Activated T-helper 1 cell treated with anti-CD3 and anti-CD28 coated beads, Interleukin-12 subunit alpha, Interleukin-12 subunit beta, Interleukin-2, Interleukin-4 antibody, amounts not matched to agents 30 ng/mL and 10 ng/mL and 1 ng/mL, durations not matched to agents 14 hours and 24 hours and 36 hours (primary cell): ENCODE measurements at regions of chr15 and their contacts with region 1.

Region 1: DNA sequence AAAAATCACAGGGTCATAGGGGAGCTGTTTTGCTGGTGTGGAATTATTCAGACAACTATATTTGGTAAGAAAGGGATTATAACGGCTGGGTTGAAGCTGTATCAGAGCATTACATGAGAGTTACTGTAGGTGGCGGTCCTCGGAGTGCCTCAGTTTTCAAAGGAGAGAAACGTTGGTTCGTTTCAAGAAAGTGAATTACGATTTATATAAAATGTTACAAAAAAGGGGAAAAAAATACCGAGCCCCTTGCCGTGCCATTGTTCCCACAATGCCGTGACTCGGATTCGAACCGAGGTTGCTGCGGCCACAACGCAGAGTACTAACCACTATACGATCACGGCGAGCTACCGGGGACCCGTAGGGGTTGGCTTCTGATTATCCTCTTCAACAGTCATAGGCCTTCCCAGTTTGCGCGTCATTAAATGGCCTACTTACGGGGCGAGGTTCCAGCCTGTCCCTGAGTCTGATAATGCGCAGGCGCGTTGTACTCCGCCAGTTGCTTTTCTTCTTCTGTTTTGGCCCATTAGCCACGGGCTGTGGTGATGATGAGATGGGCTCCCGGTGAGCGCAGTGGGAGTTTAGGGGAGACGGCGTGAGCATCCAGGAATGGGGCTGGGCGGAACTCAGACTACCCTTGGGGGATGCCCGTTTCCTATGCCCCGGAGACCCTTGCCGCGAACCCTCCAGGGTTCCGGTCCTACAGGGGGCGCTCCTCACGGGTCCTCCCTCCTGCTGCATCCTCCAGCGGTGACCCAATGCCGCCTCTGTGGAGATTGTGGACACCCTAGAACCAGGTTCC is 10.8 kb upstream of the SHF start:
- DNase-seq: peak; percentile 94
- H3K4me3 Mint-ChIP-seq: no peak overlapping the region
- H3K27ac Mint-ChIP-seq: no peak overlapping the region
- H3K4me1 Mint-ChIP-seq: peaks cover 15% of the 10 kb centered on the region
- H3K27me3 Mint-ChIP-seq: peaks cover 5% of the 10 kb centered on the region

Region 2: GRCh38 chr15:44426975-44427755 is 771.4 kb before region 1 on chr15 and contains the start of gene CTDSPL2:
- intact Hi-C with region 1: loop called (anchors 10 kb)
- DNase-seq: peak; percentile 93
- H3K4me3 Mint-ChIP-seq: peak within 1 kb of the TSS; percentile 95
- H3K27ac Mint-ChIP-seq: peak within 1 kb of the TSS; percentile 97
- H3K4me1 Mint-ChIP-seq: peaks cover 42% of the 10 kb centered on the region
- H3K27me3 Mint-ChIP-seq: no peaks in the 10 kb centered on the region
- total RNA-seq, gene CTDSPL2: 65.9 and 66.0 TPM in 2 replicates

Region 3: GRCh38 chr15:45022871-45023658 is 175.5 kb before region 1 on chr15 and contains the start of gene SORD:
- intact Hi-C with region 1: loop called (anchors 10 kb)
- DNase-seq: peak; percentile 86
- H3K4me3 Mint-ChIP-seq: peak within 1 kb of the TSS; percentile 87
- H3K27ac Mint-ChIP-seq: peak within 1 kb of the TSS; percentile 81
- H3K4me1 Mint-ChIP-seq: peaks cover 16% of the 10 kb centered on the region
- H3K27me3 Mint-ChIP-seq: peaks cover 13% of the 10 kb centered on the region
- total RNA-seq, gene SORD: 19.9 and 21.5 TPM in 2 replicates

Region 4: GRCh38 chr15:45166834-45167630 is 31.5 kb before region 1 on chr15:
- intact Hi-C with region 1: loop called (anchors 1 kb)
- DNase-seq: peak; percentile 77
- H3K4me3 Mint-ChIP-seq: peak overlapping the region; percentile 75
- H3K27ac Mint-ChIP-seq: peak overlapping the region; percentile 81
- H3K4me1 Mint-ChIP-seq: peaks cover 21% of the 10 kb centered on the region
- H3K27me3 Mint-ChIP-seq: no peaks in the 10 kb centered on the region

Region 5: GRCh38 chr15:45268135-45268534 is 69.6 kb after region 1 on chr15:
- intact Hi-C with region 1: no loop called
- DNase-seq: no peak
- H3K4me3 Mint-ChIP-seq: no peak overlapping the region
- H3K27ac Mint-ChIP-seq: no peak overlapping the region
- H3K4me1 Mint-ChIP-seq: no peaks in the 10 kb centered on the region
- H3K27me3 Mint-ChIP-seq: peaks cover 2% of the 10 kb centered on the region

Region 6: GRCh38 chr15:45279024-45279698 is 80.6 kb after region 1 on chr15:
- intact Hi-C with region 1: loop called (anchors 1 kb)
- DNase-seq: peak; percentile 95
- H3K4me3 Mint-ChIP-seq: peak overlapping the region; percentile 90
- H3K27ac Mint-ChIP-seq: peak overlapping the region; percentile 77
- H3K4me1 Mint-ChIP-seq: peaks cover 7% of the 10 kb centered on the region
- H3K27me3 Mint-ChIP-seq: peaks cover 12% of the 10 kb centered on the region

Region 7: DNA sequence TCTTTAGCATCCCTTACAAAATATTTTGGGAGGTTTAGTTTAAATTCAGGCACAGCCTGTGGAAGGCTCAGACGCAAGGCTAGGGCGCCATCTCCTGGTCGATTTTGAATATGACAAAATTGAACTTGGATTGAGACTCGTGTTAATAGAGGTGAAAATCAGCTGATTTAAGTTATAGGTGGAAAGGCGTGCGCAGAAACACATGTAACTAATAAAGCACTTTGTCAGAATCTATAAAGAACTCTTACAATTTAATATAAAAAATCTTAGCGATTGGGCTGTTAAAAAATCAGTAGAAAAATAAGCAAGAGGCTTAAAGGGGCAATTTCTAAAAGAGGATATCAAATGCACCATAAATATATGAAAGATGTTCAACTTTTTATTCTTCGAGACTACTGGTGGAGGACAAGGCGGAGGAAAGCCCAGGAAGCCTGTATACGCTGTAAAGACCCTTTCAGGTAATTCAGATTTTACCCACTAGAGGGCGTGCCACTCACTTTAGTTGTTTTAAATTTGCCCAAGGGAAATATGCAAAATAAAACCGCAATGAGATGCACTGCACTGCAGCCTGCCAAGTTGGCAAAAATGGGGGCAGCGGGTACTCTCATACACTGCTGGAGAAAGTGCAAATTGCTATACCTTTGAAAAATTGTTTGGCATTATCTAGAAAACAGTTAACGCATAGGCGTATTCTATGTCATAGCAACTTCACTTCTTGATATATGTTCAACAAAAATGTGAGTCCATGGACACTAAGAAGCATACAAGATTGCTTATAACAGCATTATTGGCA is 259.3 kb after region 1 on chr15:
- intact Hi-C with region 1: loop called (anchors 1 kb)
- DNase-seq: peak; percentile 72
- H3K4me3 Mint-ChIP-seq: peak overlapping the region; percentile 76
- H3K27ac Mint-ChIP-seq: peak overlapping the region; percentile 91
- H3K4me1 Mint-ChIP-seq: peaks cover 49% of the 10 kb centered on the region
- H3K27me3 Mint-ChIP-seq: no peaks in the 10 kb centered on the region

Region 8: DNA sequence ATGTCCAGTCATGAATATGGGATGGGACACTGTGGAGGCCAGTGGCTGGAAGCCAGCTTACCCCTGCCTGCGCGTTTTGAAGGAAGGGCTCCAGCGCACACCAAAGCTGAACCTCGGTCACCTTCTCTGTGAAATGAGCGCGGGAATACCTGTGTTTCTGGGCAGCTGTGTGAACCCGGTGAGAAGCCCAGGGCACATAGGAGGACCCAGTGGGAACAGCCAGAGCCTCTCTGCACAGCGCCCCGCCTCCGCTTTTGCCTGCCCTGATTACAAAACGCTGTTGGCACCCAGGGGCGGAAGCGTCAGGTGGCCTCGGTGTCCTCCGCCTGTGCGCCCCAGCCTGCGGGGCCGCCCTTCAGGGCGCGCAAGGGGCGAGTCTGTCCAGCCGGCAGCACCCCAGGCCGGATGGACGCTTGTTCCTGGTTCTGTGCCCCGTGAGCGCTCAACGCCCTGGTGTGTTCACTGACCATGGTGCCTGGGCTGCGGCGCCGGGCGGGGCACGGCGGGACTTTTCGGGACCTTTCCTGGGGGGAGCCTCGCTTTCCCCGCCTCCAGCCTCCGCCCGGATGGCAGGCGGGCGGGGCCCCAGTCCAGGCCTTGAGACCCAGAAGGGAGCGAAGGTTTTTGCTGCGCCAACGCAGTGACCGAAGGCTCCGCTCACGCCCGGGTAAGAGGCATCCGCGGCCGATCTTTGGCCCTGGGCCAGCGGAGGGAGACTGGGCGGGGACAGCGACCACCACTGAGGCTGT is 436.1 kb after region 1 on chr15 and contains the start of gene SQOR:
- intact Hi-C with region 1: loop called (anchors 2 kb)
- DNase-seq: peak; percentile 67
- H3K4me3 Mint-ChIP-seq: peak within 1 kb of the TSS; percentile 99
- H3K27ac Mint-ChIP-seq: peak within 1 kb of the TSS; percentile 94
- H3K4me1 Mint-ChIP-seq: peaks cover 50% of the 10 kb centered on the region
- H3K27me3 Mint-ChIP-seq: peaks cover 16% of the 10 kb centered on the region
- total RNA-seq, gene SQOR: 96.0 and 100 TPM in 2 replicates